ENCODE measurements at regions of chr6 and their contacts with region 1.

Region 1: GRCh38 chr6:106444777-106445507 is 84.4 kb downstream of the CRYBG1 start:
- DNase-seq: peak; percentile 69
- ATAC-seq: peak; percentile 75; the same call in 1 of the 2 replicates
- H3K4me3 ChIP-seq: no peak overlapping the region
- H3K27ac ChIP-seq: no peak overlapping the region
- H3K4me1 ChIP-seq: no peaks in the 10 kb centered on the region
- H3K27me3 ChIP-seq: peaks cover 18% of the 10 kb centered on the region
- CTCF ChIP-seq: peak; percentile 73
- POLR2A ChIP-seq: no peak
- RAD21 ChIP-seq: peak; percentile 78

Region 2: DNA sequence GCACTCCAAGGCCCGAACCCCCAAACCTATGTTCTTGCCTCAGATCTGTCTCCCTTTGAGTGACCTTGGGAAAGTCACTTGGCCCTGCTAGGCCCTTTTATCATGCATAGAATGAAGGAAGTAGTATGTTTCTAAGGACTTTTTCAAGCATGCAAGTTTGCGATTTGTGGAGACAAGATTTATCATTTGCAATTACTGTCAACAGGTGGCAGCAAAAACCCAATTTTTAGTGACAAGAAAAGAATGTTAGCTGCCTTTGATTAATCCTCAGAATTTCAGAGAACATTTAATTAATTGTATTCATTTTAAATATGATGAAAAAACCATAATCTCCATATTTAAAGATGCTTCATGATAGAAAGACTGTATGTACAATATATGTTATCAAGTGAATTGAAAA is 1013.7 kb before region 1 on chr6:
- CTCF ChIA-PET with region 1: no interaction called
- POLR2A ChIA-PET with region 1: no interaction called
- dilution Hi-C with region 1: no loop called
- in situ Hi-C with region 1: no loop called
- intact Hi-C with region 1: loop called (anchors 1 kb)
- DNase-seq: peak; percentile 68
- ATAC-seq: no peak
- H3K4me3 ChIP-seq: no peak overlapping the region
- H3K27ac ChIP-seq: no peak overlapping the region
- H3K4me1 ChIP-seq: peaks cover 23% of the 10 kb centered on the region
- H3K27me3 ChIP-seq: no peaks in the 10 kb centered on the region
- CTCF ChIP-seq: peak; percentile 70
- POLR2A ChIP-seq: no peak
- RAD21 ChIP-seq: peak; percentile 61

Region 3: GRCh38 chr6:106512048-106512967 is 67.4 kb after region 1 on chr6:
- CTCF ChIA-PET with region 1: interaction called, 3 read pairs
- POLR2A ChIA-PET with region 1: no interaction called
- dilution Hi-C with region 1: no loop called
- in situ Hi-C with region 1: loop called (anchors 10 kb)
- intact Hi-C with region 1: loop called (anchors 2 kb)
- DNase-seq: no peak
- ATAC-seq: peak; percentile 70
- H3K4me3 ChIP-seq: peak overlapping the region; percentile 52
- H3K27ac ChIP-seq: no peak overlapping the region
- H3K4me1 ChIP-seq: peaks cover 7% of the 10 kb centered on the region; the same call in 1 of the 2 replicates
- H3K27me3 ChIP-seq: peaks cover 30% of the 10 kb centered on the region
- CTCF ChIP-seq: peak; percentile 30
- POLR2A ChIP-seq: no peak
- RAD21 ChIP-seq: no peak

Region 4: DNA sequence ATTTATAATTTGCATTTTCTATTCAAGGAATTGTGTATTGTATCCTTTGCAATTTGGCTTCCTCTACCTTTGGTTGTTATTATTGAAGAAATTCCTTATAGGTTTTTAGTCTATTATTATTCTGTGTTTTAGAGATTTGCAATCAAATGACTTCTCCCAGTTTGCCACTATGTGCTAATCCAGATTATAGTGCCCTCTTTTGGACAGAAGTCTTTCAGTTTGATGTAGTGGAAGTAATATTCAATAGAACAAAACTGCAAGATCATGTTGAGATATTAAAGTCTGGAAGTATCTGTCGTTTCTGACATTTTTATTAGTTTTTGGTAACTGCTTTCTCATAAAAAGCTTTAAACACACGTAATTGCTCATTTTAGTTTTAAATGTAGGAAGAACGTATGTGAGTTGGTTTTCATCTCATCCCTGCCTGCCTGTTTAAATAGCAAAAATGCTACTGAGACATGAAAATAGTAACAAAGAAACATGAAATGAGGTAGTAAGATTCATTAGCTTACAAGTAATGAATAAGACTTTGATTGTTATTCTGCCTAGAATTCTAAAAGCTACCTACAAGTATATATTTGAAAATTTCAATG is 111.5 kb after region 1 on chr6:
- CTCF ChIA-PET with region 1: interaction called, 3 read pairs
- POLR2A ChIA-PET with region 1: no interaction called
- dilution Hi-C with region 1: loop called (anchors 25 kb)
- in situ Hi-C with region 1: no loop called
- intact Hi-C with region 1: loop called (anchors 2 kb)
- DNase-seq: peak; percentile 47
- ATAC-seq: peak; percentile 49; the same call in 1 of the 2 replicates
- H3K4me3 ChIP-seq: no peak overlapping the region
- H3K27ac ChIP-seq: no peak overlapping the region
- H3K4me1 ChIP-seq: no peaks in the 10 kb centered on the region; the same call in 1 of the 2 replicates
- H3K27me3 ChIP-seq: no peaks in the 10 kb centered on the region
- CTCF ChIP-seq: peak; percentile 54
- POLR2A ChIP-seq: no peak
- RAD21 ChIP-seq: peak; percentile 61

Region 5: GRCh38 chr6:106568530-106568929 is 123.6 kb after region 1 on chr6:
- CTCF ChIA-PET with region 1: interaction called, 31 read pairs
- POLR2A ChIA-PET with region 1: no interaction called
- dilution Hi-C with region 1: loop called (anchors 25 kb)
- in situ Hi-C with region 1: loop called (anchors 5 kb)
- intact Hi-C with region 1: loop called (anchors 1 kb)
- DNase-seq: peak; percentile 55
- ATAC-seq: no peak
- H3K4me3 ChIP-seq: no peak overlapping the region
- H3K27ac ChIP-seq: no peak overlapping the region
- H3K4me1 ChIP-seq: peaks cover 2% of the 10 kb centered on the region; the same call in 1 of the 2 replicates
- H3K27me3 ChIP-seq: no peaks in the 10 kb centered on the region
- CTCF ChIP-seq: no peak
- POLR2A ChIP-seq: no peak
- RAD21 ChIP-seq: no peak

Measured in IMR-90 (cell line).